ENCODE measurements at regions of chr10 and their contacts with region 1.

Region 1: DNA sequence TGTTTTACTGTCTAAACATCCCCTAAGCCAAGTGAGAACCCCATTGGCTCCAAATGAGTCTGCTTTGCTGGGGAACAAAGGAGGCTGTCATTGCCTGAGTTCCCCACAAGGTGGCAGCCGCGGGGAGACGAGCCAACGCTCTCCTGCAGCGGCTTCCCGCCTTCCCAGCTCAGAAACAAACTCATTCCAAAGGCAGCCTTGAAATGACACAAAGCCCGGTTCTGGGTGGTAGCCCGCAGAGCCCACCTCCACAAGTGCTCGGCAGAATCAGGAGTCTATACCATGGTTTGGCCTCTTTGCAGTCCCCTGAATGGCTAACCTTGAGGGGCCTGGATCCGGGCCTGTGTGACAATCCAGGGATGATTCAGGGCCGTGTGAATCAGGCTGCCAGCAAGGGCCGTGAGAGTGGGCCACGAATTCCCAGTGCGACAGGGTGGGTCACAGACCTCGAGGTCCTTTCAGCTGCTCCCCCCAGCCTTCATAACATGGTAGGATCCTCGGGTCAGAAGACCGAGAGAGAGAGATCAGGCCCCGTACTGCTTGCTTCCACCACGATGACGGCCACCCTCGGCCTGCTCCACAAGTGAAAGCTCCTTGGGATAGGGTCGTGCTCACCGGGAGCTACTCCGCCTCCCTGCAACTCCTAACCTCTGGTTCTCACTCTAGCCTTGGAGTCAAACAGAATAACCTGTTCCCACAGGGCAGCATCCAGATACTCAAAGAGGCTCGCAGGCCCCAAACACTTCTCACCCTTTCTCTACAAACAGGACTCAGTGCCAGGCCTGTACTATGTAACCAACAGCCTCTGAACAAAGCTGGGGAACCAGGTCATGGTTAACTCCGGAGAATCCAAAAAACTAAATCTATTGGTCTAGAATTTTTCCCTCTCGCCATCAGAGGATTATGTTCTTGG is 79.6 kb downstream of the DLG5 start:
- DNase-seq: peak; percentile 74
- H3K4me3 ChIP-seq: no peak overlapping the region
- H3K27ac ChIP-seq: peak overlapping the region; percentile 89
- H3K4me1 ChIP-seq: peaks cover 23% of the 10 kb centered on the region
- H3K27me3 ChIP-seq: no peaks in the 10 kb centered on the region
- CTCF ChIP-seq: peak; percentile 90 to 94
- POLR2A ChIP-seq: no peak

Region 2: DNA sequence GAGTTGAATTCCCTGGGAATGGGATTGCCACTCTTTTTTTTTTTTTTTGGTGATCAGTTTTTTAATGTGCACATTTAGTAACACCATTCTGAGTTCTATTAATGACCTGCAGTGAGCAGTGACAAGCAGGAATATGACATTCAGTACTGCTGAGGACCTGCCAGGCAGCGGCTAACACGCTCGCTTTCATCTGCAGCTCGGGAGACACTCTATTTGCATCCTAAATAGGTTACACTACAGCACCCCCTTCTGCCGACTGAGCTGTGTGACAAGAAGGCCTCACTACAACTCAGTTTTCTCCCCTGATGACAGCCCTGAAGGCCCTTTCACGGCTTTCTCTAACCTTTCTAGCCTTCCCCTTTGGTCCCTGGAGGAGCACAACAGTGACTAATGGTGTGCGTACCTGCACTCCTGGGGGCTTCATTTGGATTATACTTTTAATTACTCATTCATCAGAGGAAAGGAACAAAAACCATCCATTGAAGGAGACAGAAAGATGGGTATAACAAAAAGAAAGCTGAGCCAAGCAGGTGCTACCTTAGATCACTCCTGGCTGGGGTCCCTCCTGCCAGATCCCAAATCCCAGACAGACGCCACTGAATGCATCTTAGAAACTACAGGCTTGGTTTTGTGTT is 1543.2 kb before region 1 on chr10:
- CTCF ChIA-PET with region 1: no interaction called
- POLR2A ChIA-PET with region 1: no interaction called
- dilution Hi-C with region 1: no loop called
- intact Hi-C with region 1: no loop called
- DNase-seq: peak; percentile 67
- H3K4me3 ChIP-seq: no peak overlapping the region
- H3K27ac ChIP-seq: no peak overlapping the region
- H3K4me1 ChIP-seq: no peaks in the 10 kb centered on the region
- H3K27me3 ChIP-seq: no peaks in the 10 kb centered on the region
- CTCF ChIP-seq: peak; percentile 38 to 61
- POLR2A ChIP-seq: no peak

Region 3: GRCh38 chr10:77165445-77166208 is 681.3 kb before region 1 on chr10:
- CTCF ChIA-PET with region 1: no interaction called
- POLR2A ChIA-PET with region 1: no interaction called
- dilution Hi-C with region 1: no loop called
- intact Hi-C with region 1: loop called (anchors 2 kb)
- DNase-seq: peak; percentile 77
- H3K4me3 ChIP-seq: no peak overlapping the region
- H3K27ac ChIP-seq: peak overlapping the region; percentile 80
- H3K4me1 ChIP-seq: peaks cover 41% of the 10 kb centered on the region
- H3K27me3 ChIP-seq: no peaks in the 10 kb centered on the region
- CTCF ChIP-seq: peak; percentile 59 to 66
- POLR2A ChIP-seq: no peak

Region 4: DNA sequence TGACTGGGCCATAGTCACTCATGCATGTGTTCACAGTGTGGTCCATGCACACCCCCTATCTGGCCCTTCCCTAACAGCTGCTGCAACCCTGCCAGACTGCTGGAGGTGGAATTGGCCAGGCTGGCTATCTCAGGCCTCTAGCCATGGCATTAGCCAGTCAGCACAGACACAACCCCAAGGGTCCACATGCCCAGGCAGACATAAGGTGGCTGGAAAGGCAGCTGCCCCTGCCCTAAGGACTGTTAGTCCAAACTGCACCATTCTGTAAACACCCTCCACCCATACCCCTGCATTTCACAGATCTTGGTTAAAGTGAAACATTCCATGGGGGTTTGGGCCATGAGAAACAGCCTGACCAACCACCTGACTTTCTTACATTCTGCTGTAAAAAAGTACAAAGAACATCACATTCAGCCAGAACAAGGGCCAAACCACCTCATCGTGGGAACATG is 72.0 kb before region 1 on chr10:
- CTCF ChIA-PET with region 1: no interaction called
- POLR2A ChIA-PET with region 1: no interaction called
- dilution Hi-C with region 1: no loop called
- intact Hi-C with region 1: no loop called
- DNase-seq: no peak
- H3K4me3 ChIP-seq: no peak overlapping the region
- H3K27ac ChIP-seq: no peak overlapping the region
- H3K4me1 ChIP-seq: no peaks in the 10 kb centered on the region
- H3K27me3 ChIP-seq: no peaks in the 10 kb centered on the region
- CTCF ChIP-seq: no peak
- POLR2A ChIP-seq: no peak

Region 5: DNA sequence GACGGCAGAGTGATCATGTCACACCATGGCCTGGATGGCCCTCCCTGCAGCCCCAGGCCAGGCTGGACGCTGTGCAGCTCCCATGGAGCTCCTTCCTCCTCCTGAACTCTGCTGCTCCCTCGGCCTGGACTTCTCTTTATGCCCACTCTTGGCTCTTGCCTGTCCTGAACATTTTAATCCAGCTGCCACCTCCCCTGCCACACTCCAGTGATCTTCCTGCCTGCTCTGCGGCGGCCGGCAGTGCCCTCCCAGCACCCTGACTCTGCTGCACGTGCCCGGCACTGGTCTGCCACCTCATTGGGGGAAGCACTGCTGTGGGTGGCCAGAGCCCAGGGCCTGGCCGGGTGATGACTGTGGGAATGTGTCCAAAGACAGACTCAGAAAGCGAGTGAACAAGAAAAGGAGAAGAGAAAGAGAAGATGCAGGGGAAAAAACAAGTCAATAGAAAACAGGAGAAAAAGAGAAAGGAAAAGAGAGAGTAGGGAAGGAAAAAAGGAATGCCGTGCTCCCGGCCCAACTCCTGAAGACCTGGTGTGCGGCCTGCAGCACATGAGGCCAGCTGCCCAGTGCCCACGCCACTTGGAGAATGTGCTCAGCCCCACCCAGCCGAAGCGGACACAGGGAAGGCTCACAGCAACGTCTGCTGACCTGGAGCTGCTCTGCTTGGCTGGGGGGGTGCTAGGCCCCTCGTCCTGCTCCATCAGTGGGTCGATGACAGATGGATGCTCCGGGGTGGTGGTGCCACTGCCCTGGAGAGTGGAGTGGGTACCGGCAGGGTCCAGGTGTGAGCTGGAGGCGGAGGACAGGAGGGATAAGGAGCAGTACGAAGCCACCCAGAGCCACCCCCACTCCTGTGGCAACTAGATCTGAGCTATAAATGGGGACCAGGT is 36.3 kb before region 1 on chr10:
- CTCF ChIA-PET with region 1: no interaction called
- POLR2A ChIA-PET with region 1: no interaction called
- dilution Hi-C with region 1: no loop called
- intact Hi-C with region 1: no loop called
- DNase-seq: no peak
- H3K4me3 ChIP-seq: no peak overlapping the region
- H3K27ac ChIP-seq: no peak overlapping the region
- H3K4me1 ChIP-seq: no peaks in the 10 kb centered on the region
- H3K27me3 ChIP-seq: no peaks in the 10 kb centered on the region
- CTCF ChIP-seq: no peak
- POLR2A ChIP-seq: no peak

Region 6: DNA sequence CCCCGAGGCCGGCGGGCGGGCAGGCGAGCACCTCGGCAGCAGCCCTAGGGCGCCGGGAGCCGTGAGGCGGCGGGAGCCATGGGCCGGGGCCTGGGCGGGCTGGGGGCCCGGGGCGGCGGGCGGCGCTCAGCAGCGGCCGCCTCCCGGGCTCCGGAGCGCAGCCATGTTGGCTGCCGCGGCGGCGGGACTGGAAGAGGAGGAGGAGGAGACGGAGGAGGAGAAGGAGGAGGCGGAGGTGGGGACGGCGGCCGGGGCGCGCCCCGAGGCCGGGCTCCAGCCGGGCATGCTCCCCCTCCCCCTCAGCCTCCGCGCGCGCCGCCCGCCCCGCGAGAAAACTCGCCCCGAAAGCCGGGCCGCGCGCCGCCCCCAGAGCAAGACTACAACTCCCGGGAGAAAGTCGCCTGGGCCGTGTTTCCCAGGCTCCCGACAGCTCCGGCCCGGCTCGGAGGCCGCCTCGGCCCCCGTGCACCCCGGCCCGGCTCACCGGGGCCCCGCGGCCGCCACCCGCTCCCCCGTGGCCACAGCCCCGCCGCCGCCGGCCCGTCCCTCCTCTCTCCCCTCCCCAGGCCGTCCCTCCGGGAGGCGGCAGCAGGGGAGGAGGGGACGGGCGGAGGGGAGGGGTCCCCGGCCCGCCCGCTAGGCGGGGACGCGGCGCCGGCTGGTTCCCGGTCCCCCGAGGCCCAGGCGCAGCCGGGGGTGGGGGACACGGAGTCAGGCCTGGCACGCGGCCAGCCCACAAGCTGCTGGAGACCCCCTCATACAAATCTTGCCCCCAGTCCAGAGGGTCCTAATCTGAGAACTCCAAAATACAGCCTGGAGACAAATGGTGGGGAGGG is 79.8 kb after region 1 on chr10 and contains the start of gene DLG5:
- CTCF ChIA-PET with region 1: interaction called, 12 read pairs
- POLR2A ChIA-PET with region 1: no interaction called
- dilution Hi-C with region 1: no loop called
- intact Hi-C with region 1: loop called (anchors 1 kb)
- DNase-seq: peak; percentile 26
- H3K4me3 ChIP-seq: peak within 1 kb of the TSS; percentile 47 to 75 (median 53)
- H3K27ac ChIP-seq: no peak within 1 kb of the TSS
- H3K4me1 ChIP-seq: peaks cover 14% of the 10 kb centered on the region
- H3K27me3 ChIP-seq: peaks cover 21 to 26% of the 10 kb centered on the region in 2 experiments
- CTCF ChIP-seq: no peak
- POLR2A ChIP-seq: peak; percentile 40
- total RNA-seq, gene DLG5: 23.1 and 24.9 TPM in 2 replicates

Region 7: GRCh38 chr10:77974396-77975074 is 127.6 kb after region 1 on chr10:
- CTCF ChIA-PET with region 1: interaction called, 21 read pairs
- POLR2A ChIA-PET with region 1: no interaction called
- dilution Hi-C with region 1: no loop called
- intact Hi-C with region 1: loop called (anchors 1 kb)
- DNase-seq: peak; percentile 18
- H3K4me3 ChIP-seq: no peak overlapping the region
- H3K27ac ChIP-seq: no peak overlapping the region
- H3K4me1 ChIP-seq: peaks cover 7% of the 10 kb centered on the region
- H3K27me3 ChIP-seq: no peaks in the 10 kb centered on the region
- CTCF ChIP-seq: peak; percentile 11 to 33
- POLR2A ChIP-seq: no peak

Region 8: GRCh38 chr10:77989081-77989724 is 142.2 kb after region 1 on chr10:
- CTCF ChIA-PET with region 1: interaction called, 58 read pairs
- POLR2A ChIA-PET with region 1: no interaction called
- dilution Hi-C with region 1: no loop called
- intact Hi-C with region 1: no loop called
- DNase-seq: no peak
- H3K4me3 ChIP-seq: no peak overlapping the region
- H3K27ac ChIP-seq: no peak overlapping the region
- H3K4me1 ChIP-seq: peaks cover 12% of the 10 kb centered on the region
- H3K27me3 ChIP-seq: no peaks in the 10 kb centered on the region
- CTCF ChIP-seq: no peak
- POLR2A ChIP-seq: no peak

Region 9: DNA sequence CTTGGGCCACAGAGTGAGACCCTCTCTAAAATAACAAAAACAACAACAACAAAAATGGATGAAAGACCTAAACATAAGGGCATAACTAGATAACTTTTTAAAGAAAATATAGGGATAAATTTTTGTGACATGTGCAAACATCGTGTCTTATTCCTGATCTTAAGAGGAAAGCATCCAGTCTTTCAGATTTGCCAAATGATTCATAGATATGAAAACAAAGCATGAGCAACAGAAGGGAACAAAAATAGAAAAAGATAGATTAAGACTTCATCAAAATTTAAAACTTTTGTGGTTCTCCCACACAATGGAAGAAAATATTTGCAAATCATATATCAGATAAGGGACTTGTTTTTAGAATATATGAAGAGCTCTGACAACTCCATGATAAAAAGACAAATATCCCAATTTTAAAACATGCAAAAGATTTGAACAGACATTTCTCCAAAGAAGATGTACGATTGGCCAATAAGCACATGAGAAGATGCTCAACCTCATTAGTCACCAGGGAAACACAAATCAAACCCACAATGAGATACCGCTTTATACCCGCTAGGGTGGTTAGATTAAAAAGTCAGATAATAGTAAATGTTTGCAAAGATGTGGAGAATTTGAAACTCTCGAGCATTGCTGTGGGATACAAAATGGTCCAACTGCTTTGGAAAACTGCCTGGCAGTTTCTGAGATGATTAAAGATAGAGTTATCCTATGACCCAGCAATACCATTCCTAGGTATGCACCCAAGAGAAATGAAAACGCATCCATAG is 1520.6 kb after region 1 on chr10:
- CTCF ChIA-PET with region 1: no interaction called
- POLR2A ChIA-PET with region 1: no interaction called
- dilution Hi-C with region 1: no loop called
- intact Hi-C with region 1: no loop called
- DNase-seq: no peak
- H3K4me3 ChIP-seq: no peak overlapping the region
- H3K27ac ChIP-seq: no peak overlapping the region
- H3K4me1 ChIP-seq: no peaks in the 10 kb centered on the region
- H3K27me3 ChIP-seq: peaks cover 21 to 22% of the 10 kb centered on the region in 2 experiments
- CTCF ChIP-seq: no peak
- POLR2A ChIP-seq: no peak